Caco-2 (cell line): ENCODE measurements at regions of chr9 and their contacts with region 1.

Region 1: GRCh38 chr9:105064315-105065097 is 136.6 kb upstream of the ABCA1 start:
- DNase-seq: peak; percentile 86 to 92
- H3K4me3 ChIP-seq: no peak overlapping the region
- H3K4me3 Mint-ChIP-seq: peak overlapping the region; percentile 35
- H3K27ac Mint-ChIP-seq: peak overlapping the region; percentile 90
- H3K4me1 ChIP-seq: peaks cover 27% of the 10 kb centered on the region
- H3K4me1 Mint-ChIP-seq: peaks cover 31% of the 10 kb centered on the region
- H3K27me3 ChIP-seq: no peaks in the 10 kb centered on the region
- H3K27me3 Mint-ChIP-seq: no peaks in the 10 kb centered on the region
- CTCF ChIP-seq: no peak

Region 2: GRCh38 chr9:104968025-104968982 is 96.2 kb before region 1 on chr9:
- CTCF ChIA-PET with region 1: no interaction called
- POLR2A ChIA-PET with region 1: interaction called, 3 read pairs
- intact Hi-C with region 1: loop called (anchors 5 kb)
- DNase-seq: peak; percentile 87 to 90
- H3K4me3 ChIP-seq: peak overlapping the region; percentile 77
- H3K4me3 Mint-ChIP-seq: peak overlapping the region; percentile 89
- H3K27ac Mint-ChIP-seq: peak overlapping the region; percentile 82
- H3K4me1 ChIP-seq: peaks cover 22% of the 10 kb centered on the region
- H3K4me1 Mint-ChIP-seq: peaks cover 37% of the 10 kb centered on the region
- H3K27me3 ChIP-seq: no peaks in the 10 kb centered on the region
- H3K27me3 Mint-ChIP-seq: no peaks in the 10 kb centered on the region
- CTCF ChIP-seq: no peak

Region 3: DNA sequence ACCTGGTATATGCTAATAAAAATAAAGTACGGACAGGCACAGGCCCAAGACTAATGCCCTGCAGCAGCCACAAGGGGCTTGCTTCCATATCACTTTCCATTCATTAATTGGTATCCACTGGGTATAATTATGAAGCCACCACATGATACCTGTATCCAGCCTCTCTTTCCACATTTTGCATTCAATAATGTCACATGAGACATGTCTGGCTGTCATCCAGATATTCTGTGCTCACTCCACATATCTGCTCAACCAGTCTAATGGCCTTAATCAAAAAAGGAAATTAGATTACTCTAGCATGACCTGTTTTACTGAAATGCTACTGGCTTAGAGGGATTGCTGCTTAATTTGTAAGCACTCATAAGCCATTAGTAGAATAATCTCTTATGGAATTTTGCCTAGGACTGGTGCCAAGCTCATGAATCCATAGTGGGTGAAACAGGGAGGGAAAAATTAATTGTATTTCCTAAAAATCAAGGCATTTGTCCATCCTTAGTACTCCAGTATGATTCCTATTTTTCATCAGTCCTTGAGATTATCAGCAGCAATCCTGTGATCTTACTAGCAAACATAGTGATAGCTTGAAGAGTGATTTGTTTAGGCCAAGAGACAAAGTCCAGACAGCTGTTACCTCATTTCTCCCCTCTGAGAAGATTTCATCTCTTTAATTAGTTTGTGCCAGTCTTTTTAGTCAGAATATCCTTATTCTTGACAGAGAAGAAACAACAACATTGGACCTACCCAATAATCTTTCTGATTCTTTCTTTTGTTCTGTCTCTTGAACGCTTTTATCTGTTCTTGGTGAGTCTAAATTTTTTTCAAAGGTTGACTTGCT is 17.4 kb before region 1 on chr9:
- CTCF ChIA-PET with region 1: no interaction called
- POLR2A ChIA-PET with region 1: no interaction called
- intact Hi-C with region 1: loop called (anchors 1 kb)
- DNase-seq: peak in 1 of 2 experiments; percentile 36
- H3K4me3 ChIP-seq: no peak overlapping the region
- H3K4me3 Mint-ChIP-seq: peak overlapping the region; percentile 9
- H3K27ac Mint-ChIP-seq: peak overlapping the region; percentile 12
- H3K4me1 ChIP-seq: peaks cover 34% of the 10 kb centered on the region
- H3K4me1 Mint-ChIP-seq: peaks cover 46% of the 10 kb centered on the region
- H3K27me3 ChIP-seq: no peaks in the 10 kb centered on the region
- H3K27me3 Mint-ChIP-seq: no peaks in the 10 kb centered on the region
- CTCF ChIP-seq: no peak

Region 4: GRCh38 chr9:105114964-105115728 is 50.6 kb after region 1 on chr9:
- CTCF ChIA-PET with region 1: no interaction called
- POLR2A ChIA-PET with region 1: no interaction called
- intact Hi-C with region 1: no loop called
- DNase-seq: no peak
- H3K4me3 ChIP-seq: no peak overlapping the region
- H3K4me3 Mint-ChIP-seq: no peak overlapping the region
- H3K27ac Mint-ChIP-seq: no peak overlapping the region
- H3K4me1 ChIP-seq: peaks cover 12% of the 10 kb centered on the region
- H3K4me1 Mint-ChIP-seq: peaks cover 8% of the 10 kb centered on the region
- H3K27me3 ChIP-seq: no peaks in the 10 kb centered on the region
- H3K27me3 Mint-ChIP-seq: no peaks in the 10 kb centered on the region
- CTCF ChIP-seq: no peak

Region 5: GRCh38 chr9:105127863-105128220 is 63.3 kb after region 1 on chr9:
- CTCF ChIA-PET with region 1: no interaction called
- POLR2A ChIA-PET with region 1: no interaction called
- intact Hi-C with region 1: loop called (anchors 5 kb)
- DNase-seq: no peak
- H3K4me3 ChIP-seq: no peak overlapping the region
- H3K4me3 Mint-ChIP-seq: no peak overlapping the region
- H3K27ac Mint-ChIP-seq: no peak overlapping the region
- H3K4me1 ChIP-seq: peaks cover 14% of the 10 kb centered on the region
- H3K4me1 Mint-ChIP-seq: peaks cover 14% of the 10 kb centered on the region
- H3K27me3 ChIP-seq: no peaks in the 10 kb centered on the region
- H3K27me3 Mint-ChIP-seq: no peaks in the 10 kb centered on the region
- CTCF ChIP-seq: no peak

Region 6: DNA sequence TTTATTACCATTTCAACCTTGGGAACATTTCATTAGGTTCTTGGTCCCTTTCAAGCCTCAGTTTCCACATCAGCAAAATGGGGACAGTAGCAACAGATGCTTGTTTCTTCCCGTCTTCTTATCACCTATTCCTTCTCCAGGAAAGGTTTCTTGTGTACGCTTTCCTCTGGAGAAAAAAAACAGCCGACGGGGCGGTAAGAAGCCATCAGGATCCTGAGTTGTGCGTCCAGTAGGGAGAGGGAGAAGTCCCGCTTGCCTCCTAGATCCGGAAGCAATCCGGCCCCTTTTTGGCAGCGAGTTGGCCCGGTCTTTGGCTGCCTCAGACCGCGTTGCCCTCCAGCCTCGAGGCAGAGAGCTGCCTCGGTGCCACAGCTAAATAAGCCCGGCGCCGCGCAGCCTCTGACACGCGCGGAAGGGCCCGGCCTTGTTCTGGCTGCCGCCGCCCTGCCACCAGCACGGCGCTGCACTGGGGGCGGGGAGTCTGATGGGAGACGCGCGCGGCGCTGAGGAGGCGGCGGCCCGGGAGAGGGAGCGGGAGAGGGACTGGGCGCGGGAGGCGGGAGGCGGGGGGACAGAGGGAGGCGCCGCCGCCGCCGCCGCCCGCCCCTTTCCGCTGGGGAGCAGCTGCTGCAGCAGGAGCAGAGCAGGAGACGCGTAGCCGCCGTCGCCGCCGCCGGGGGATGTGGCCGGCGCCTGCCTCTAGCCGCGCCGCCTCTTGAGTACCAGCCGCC is 179.7 kb after region 1 on chr9 and contains the start of gene SLC44A1:
- CTCF ChIA-PET with region 1: no interaction called
- POLR2A ChIA-PET with region 1: interaction called, 4 read pairs
- intact Hi-C with region 1: loop called (anchors 10 kb)
- DNase-seq: peak; percentile 97 to 98
- H3K4me3 ChIP-seq: peak within 1 kb of the TSS; percentile 76
- H3K4me3 Mint-ChIP-seq: peak within 1 kb of the TSS; percentile 97
- H3K27ac Mint-ChIP-seq: peak within 1 kb of the TSS; percentile 91
- H3K4me1 ChIP-seq: peaks cover 14% of the 10 kb centered on the region
- H3K4me1 Mint-ChIP-seq: peaks cover 23% of the 10 kb centered on the region
- H3K27me3 ChIP-seq: no peaks in the 10 kb centered on the region
- H3K27me3 Mint-ChIP-seq: no peaks in the 10 kb centered on the region
- CTCF ChIP-seq: no peak
- total RNA-seq, gene SLC44A1: 45.8 and 46.3 TPM in 2 replicates